ENCODE measurements at regions of chr4 and their contacts with region 1.

Region 1: DNA sequence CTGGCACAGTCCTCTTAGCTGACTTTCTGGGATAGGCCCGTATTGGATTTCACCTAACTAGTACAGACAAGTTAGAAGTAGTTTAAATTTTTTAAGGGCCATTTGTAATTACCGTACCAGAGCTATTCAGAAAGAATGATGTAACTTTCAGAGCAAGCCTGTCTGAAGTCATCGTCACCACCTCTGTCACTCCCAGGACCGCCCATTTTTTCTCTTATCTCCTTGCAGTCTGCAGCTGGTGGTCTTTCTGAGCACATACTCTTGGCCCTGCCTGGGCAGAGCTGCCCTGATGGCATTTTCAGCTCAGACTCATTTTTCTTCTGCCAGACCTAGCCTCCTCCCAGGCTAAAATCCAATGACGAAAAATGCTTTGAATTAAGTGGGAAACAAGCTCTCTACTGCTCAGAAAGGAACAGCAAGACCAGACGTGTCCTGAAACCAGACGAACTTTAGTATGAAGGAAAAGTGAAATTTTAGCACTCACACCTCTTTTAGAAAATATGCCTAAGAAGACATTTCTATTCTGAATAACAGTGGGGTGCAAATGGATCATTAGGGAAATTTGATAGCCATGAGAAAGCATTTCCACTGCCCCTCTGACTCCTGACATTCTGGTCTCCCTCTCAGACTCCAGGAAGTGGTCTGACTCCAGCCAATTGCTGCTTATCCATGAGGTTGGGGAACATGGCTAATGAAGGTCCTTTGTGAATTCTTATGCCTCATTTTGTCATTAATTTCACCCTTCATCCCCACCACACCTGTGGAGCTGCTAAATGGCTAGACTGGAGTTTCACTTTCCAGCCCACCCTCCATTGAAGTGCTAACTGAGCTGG is 162.4 kb upstream of the GYPA start:
- DNase-seq: no peak

Region 2: GRCh38 chr4:144288011-144288903 is 14.7 kb before region 1 on chr4:
- intact Hi-C with region 1: no loop called
- DNase-seq: no peak

Region 3: DNA sequence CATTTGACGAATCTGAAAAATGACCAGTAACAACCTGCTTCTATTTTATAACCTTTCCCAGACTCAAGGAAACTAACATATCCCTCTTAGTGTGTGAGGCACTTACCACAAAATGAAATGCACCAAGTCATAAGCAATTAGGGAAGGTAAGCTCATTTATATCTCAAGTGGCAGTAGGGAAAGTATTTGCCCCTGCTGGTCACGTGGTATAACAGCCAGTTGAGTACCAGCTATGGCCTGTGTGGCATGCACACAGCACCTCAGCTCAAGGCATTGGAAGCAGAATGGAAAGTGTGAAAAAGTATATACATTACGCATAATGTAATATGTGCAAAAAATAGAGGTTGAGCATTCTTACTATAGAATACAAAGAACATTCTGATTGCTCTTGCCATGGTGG is 15.9 kb after region 1 on chr4:
- intact Hi-C with region 1: loop called in 1 of 2 experiments (anchors 2 kb)
- DNase-seq: no peak